K562 (cell line): ENCODE measurements at regions of chr7 and their contacts with region 1.

Region 1: DNA sequence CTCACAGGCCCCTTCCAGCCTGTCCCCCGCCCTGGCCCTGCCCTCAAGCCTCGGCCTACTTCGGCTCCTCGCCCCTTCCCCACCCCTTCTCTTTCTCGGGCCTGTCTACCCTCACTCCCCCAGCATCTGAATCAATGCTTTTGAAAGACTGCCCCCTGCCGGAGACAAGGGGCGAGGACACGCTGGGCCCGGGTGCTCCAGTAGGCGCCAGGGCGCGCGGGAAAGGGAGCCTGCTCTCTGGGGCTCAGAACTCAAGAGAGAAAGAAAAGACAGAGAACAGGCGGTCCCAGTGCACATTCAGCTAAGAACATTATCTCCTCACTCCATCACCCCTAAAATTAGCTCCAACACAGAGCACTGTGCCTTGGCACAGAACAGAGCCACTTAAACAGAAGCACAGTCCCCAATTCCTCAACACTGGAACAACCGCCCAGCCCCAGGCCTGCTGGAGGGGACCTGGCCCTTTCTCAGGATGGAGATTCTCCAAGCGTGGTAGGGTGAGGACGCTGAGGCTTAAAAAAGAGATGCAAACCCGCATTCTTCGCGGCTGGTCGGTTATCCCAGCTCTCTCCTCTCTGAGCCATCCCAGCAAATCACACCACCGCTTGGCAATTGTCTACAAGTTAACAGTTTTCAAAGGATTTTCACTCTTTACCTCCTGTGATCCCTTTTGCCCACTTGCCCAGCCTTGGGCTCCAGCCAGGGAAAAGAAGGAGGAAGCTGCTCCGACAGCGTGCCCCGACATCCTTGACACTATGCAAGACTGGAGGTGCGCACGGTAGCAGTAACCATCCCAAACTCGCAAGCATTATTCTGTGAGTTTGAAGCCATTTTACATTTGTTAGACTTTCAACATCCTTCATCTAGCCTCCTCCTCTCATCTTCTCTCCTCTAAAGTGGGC is 2.1 kb downstream of the GIGYF1 start:
- DNase-seq: peak; percentile 82 to 95 (median 88)
- ATAC-seq: peak; percentile 91
- H3K4me3 ChIP-seq: peak overlapping the region; percentile 92
- H3K27ac ChIP-seq: peak overlapping the region; percentile 56
- H3K4me1 ChIP-seq: peaks cover 17 to 60% of the 10 kb centered on the region in 2 experiments
- H3K27me3 ChIP-seq: no peaks in the 10 kb centered on the region
- CTCF ChIP-seq: peak; percentile 92 to 96 (median 94)
- EP300 ChIP-seq: no peak
- POLR2A ChIP-seq: 0 out of 2 replicates have a peak, but pooled peaks have one; percentile 34
- RAD21 ChIP-seq: peak; percentile 85 to 88

Region 2: DNA sequence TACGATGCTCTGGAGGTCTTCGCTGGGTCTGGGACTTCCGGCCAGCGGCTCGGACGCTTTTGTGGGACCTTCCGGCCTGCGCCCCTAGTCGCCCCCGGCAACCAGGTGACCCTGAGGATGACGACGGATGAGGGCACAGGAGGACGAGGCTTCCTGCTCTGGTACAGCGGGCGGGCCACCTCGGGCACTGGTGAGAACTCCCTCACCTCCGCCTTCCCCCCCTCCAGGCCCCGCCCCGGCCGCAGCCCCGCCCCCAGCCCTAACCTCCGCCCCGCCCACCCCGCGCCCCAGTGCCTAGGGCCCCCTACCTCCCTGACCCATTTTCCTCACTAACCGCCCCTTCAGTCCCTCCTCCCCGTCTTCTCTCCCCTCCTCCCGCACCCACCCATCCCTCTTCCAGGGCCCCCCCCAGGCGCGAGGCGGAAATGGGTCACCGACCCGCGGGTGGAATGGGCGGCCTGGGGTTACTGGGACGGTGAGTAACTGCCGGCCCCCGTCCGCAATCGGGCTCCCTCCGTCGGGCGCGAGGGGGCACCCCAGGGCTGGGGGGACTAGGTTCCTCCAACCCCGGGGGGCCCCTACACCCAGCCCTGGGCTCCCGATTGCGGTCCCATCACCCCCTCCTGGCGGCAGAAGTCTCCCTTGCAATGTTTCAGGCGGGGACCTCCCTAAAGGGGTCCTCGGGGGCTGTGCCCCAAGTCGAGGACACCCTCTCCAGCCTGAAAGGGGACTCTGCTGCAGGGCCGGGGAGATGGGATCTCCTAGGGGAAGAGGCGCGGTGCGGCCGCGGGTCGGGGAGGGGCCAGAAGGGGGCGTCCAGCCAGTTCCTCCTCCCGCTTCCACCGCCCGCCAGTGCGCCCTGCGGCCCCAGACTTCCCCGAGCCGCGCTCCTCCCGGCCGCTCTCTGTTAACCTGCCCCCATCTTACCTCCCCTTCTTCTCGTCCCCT is 87.6 kb before region 1 on chr7:
- CTCF ChIA-PET with region 1: interaction called, 8 read pairs
- POLR2A ChIA-PET with region 1: no interaction called
- in situ Hi-C with region 1: no loop called
- intact Hi-C with region 1: loop called (anchors 2 kb)
- DNase-seq: peak; percentile 93 to 97 (median 96)
- ATAC-seq: peak; percentile 91
- H3K4me3 ChIP-seq: peak overlapping the region; percentile 58
- H3K27ac ChIP-seq: peak overlapping the region; percentile 54
- H3K4me1 ChIP-seq: peaks cover 35 to 65% of the 10 kb centered on the region in 2 experiments
- H3K27me3 ChIP-seq: no peaks in the 10 kb centered on the region
- CTCF ChIP-seq: peak; percentile 50 to 75 (median 65); a peak in 5 of 6 replicates
- EP300 ChIP-seq: 0 out of 2 replicates have a peak, but pooled peaks have one; percentile 14
- POLR2A ChIP-seq: peak; percentile 40
- RAD21 ChIP-seq: peak; percentile 65

Region 3: GRCh38 chr7:100626530-100627237 is 65.2 kb before region 1 on chr7:
- CTCF ChIA-PET with region 1: interaction called, 6 read pairs
- POLR2A ChIA-PET with region 1: interaction called, 3 read pairs
- in situ Hi-C with region 1: no loop called
- intact Hi-C with region 1: loop called (anchors 2 kb)
- DNase-seq: peak; percentile 92 to 99 (median 99)
- ATAC-seq: peak; percentile 96
- H3K4me3 ChIP-seq: peak overlapping the region; percentile 41; the same call in 1 of the 2 replicates
- H3K27ac ChIP-seq: peak overlapping the region; percentile 74; the same call in 2 of the 3 replicates
- H3K4me1 ChIP-seq: peaks cover 15 to 41% of the 10 kb centered on the region in 2 experiments
- H3K27me3 ChIP-seq: no peaks in the 10 kb centered on the region
- CTCF ChIP-seq: no peak
- EP300 ChIP-seq: no peak; the same call in 1 of the 2 replicates
- POLR2A ChIP-seq: peak; percentile 71; the same call in 1 of the 2 replicates
- RAD21 ChIP-seq: no peak

Region 4: GRCh38 chr7:100680167-100680575 is 11.8 kb before region 1 on chr7:
- CTCF ChIA-PET with region 1: no interaction called
- POLR2A ChIA-PET with region 1: interaction called, 16 read pairs
- in situ Hi-C with region 1: no loop called
- intact Hi-C with region 1: no loop called
- DNase-seq: peak in 2 of 4 experiments; percentile 34 to 49
- ATAC-seq: peak; percentile 13
- H3K4me3 ChIP-seq: no peak overlapping the region
- H3K27ac ChIP-seq: no peak overlapping the region
- H3K4me1 ChIP-seq: peaks cover 4 to 90% of the 10 kb centered on the region in 2 experiments
- H3K27me3 ChIP-seq: no peaks in the 10 kb centered on the region
- CTCF ChIP-seq: no peak
- EP300 ChIP-seq: no peak
- POLR2A ChIP-seq: no peak; the same call in 1 of the 2 replicates
- RAD21 ChIP-seq: no peak

Region 5: GRCh38 chr7:100736671-100737070 is 44.7 kb after region 1 on chr7:
- CTCF ChIA-PET with region 1: no interaction called
- POLR2A ChIA-PET with region 1: no interaction called
- in situ Hi-C with region 1: no loop called
- intact Hi-C with region 1: no loop called
- DNase-seq: peak in 1 of 4 experiments; percentile 22
- ATAC-seq: no peak
- H3K4me3 ChIP-seq: no peak overlapping the region
- H3K27ac ChIP-seq: no peak overlapping the region
- H3K4me1 ChIP-seq: peaks cover 0 to 6% of the 10 kb centered on the region in 2 experiments; a peak in 2 of 5 replicates
- H3K27me3 ChIP-seq: peaks cover 2 to 21% of the 10 kb centered on the region in 2 experiments; a peak in 3 of 5 replicates
- CTCF ChIP-seq: no peak
- EP300 ChIP-seq: no peak
- POLR2A ChIP-seq: no peak
- RAD21 ChIP-seq: no peak